ENCODE measurements at regions of chr11 and their contacts with region 1.

Region 1: DNA sequence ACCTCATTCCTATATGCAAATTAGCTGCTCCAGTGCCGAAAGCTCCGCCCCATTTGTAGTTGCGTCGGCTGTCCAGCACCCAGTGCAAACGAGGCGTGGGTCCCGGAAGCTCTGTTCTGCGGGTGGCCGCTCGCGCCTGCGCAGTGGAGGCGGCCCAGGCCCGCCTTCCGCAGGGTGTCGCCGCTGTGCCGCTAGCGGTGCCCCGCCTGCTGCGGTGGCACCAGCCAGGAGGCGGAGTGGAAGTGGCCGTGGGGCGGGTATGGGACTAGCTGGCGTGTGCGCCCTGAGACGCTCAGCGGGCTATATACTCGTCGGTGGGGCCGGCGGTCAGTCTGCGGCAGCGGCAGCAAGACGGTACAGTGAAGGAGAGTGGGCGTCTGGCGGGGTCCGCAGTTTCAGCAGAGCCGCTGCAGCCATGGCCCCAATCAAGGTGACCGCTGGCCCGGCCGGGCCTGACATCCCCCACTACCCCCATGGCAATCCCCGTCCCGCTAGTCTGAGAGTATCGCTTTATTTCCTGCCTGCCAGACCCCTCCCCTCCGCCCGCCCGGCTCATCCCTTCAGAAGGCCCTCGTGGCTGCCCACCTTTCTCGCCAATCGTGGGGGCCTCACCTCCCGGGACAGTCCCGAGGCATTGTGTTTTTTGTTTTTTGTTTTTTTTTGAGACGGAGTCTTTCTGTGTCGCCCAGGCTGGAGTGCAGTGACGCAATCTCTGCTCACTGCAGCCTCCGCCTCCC is at the start of gene PRDX5:
- DNase-seq: peak; percentile 93 to 97 (median 96)
- ATAC-seq: peak; percentile 87
- H3K4me3 ChIP-seq: peak within 1 kb of the TSS; percentile 60
- H3K4me3 Mint-ChIP-seq: peak within 1 kb of the TSS; percentile 85 to 99 (median 96)
- H3K27ac ChIP-seq: peak within 1 kb of the TSS; percentile 92
- H3K27ac Mint-ChIP-seq: peak within 1 kb of the TSS; percentile 97 to 100 (median 100)
- H3K4me1 ChIP-seq: peaks cover 7 to 10% of the 10 kb centered on the region in 2 donors
- H3K4me1 Mint-ChIP-seq: peaks cover 20 to 40% (median 28%) of the 10 kb centered on the region in 7 donors
- H3K27me3 ChIP-seq: no peaks in the 10 kb centered on the region
- H3K27me3 Mint-ChIP-seq: no peaks in the 10 kb centered on the region
- total RNA-seq, gene PRDX5: 41.4 to 99.2 (median 55.2) TPM

Region 2: GRCh38 chr11:63986156-63986931 is 331.8 kb before region 1 on chr11 and contains the start of gene OTUB1:
- CTCF ChIA-PET with region 1: no interaction called
- POLR2A ChIA-PET with region 1: interaction called, 3 read pairs
- intact Hi-C with region 1: loop called in 1 of 2 experiments (anchors 2 kb)
- DNase-seq: peak; percentile 64 to 86 (median 83)
- ATAC-seq: peak; percentile 94
- H3K4me3 ChIP-seq: peak within 1 kb of the TSS; percentile 100
- H3K4me3 Mint-ChIP-seq: peak within 1 kb of the TSS; percentile 91 to 99 (median 97)
- H3K27ac ChIP-seq: peak within 1 kb of the TSS; percentile 89
- H3K27ac Mint-ChIP-seq: peak within 1 kb of the TSS; percentile 95 to 99 (median 98)
- H3K4me1 ChIP-seq: peaks cover 14 to 20% of the 10 kb centered on the region in 2 donors
- H3K4me1 Mint-ChIP-seq: peaks cover 11 to 40% (median 35%) of the 10 kb centered on the region in 7 donors
- H3K27me3 ChIP-seq: no peaks in the 10 kb centered on the region
- H3K27me3 Mint-ChIP-seq: no peaks in the 10 kb centered on the region
- total RNA-seq, gene OTUB1: 59.4 to 99.0 (median 72.5) TPM

Region 3: GRCh38 chr11:64225612-64226506 is 92.3 kb before region 1 on chr11 and contains the starts of genes NUDT22 and TRPT1:
- CTCF ChIA-PET with region 1: interaction called, 5 read pairs
- POLR2A ChIA-PET with region 1: interaction called, 13 read pairs
- intact Hi-C with region 1: no loop called
- DNase-seq: peak; percentile 81 to 97 (median 86)
- ATAC-seq: peak; percentile 82
- H3K4me3 ChIP-seq: peak within 1 kb of the TSS; percentile 60
- H3K4me3 Mint-ChIP-seq: peak within 1 kb of the TSS; percentile 87 to 96 (median 92)
- H3K27ac ChIP-seq: peak within 1 kb of the TSS; percentile 89
- H3K27ac Mint-ChIP-seq: peak within 1 kb of the TSS; percentile 76 to 97 (median 90)
- H3K4me1 ChIP-seq: peaks cover 28 to 34% of the 10 kb centered on the region in 2 donors
- H3K4me1 Mint-ChIP-seq: peaks cover 15 to 46% (median 34%) of the 10 kb centered on the region in 7 donors
- H3K27me3 ChIP-seq: no peaks in the 10 kb centered on the region
- H3K27me3 Mint-ChIP-seq: no peaks in the 10 kb centered on the region
- total RNA-seq, gene NUDT22: 47.8 to 94.0 (median 78.3) TPM
- total RNA-seq, gene TRPT1: 24.0 to 53.0 (median 27.2) TPM

Region 4: DNA sequence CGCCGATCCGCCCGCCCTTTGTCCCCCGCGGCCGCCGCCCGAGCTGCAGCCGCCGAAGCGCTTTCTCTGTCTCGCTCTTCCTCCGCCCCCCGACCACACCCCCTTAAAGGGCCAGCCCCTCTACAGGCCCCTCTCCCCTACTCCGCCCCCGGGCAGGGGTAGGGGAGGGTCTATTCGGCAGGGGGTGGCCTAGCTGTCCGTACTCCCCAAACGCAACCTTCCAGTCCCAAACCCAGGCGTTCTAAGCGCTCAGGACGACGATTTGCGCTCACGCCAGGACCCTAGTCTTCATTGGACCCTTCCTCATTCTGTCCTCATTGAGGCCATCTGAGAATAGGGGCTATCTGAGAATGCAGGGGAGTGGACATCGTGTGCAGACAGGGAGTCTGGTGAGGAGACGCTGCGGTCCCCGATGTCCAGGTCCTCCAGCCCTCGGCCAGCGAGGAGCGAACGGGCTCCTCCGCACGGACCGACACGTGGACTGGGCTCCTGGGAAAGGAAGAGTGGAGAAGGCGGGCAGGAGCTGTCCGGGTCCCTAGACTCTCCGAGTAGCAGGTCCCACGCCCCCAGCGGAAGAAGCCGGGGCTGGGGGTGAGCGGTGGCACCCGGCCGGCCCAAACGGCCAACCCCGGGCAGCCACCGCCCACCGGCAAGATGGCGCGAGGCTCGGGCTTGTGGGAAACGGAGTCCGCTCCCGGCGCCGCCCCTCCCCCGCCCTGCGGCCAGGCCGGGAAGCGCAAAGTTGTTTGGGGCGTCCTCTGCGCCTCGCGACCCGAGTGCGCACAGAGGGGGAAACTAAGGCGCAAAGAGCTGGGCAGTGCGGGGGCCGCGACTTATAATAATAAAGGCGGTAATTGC is 71.0 kb before region 1 on chr11 and contains the start of gene PPP1R14B:
- CTCF ChIA-PET with region 1: interaction called, 3 read pairs
- POLR2A ChIA-PET with region 1: interaction called, 17 read pairs
- intact Hi-C with region 1: no loop called
- DNase-seq: peak; percentile 55 to 88 (median 70)
- ATAC-seq: peak; percentile 75
- H3K4me3 ChIP-seq: peak within 1 kb of the TSS; percentile 100
- H3K4me3 Mint-ChIP-seq: peak within 1 kb of the TSS; percentile 83 to 93 (median 88)
- H3K27ac ChIP-seq: peak within 1 kb of the TSS; percentile 64
- H3K27ac Mint-ChIP-seq: peak within 1 kb of the TSS; percentile 65 to 88 (median 85)
- H3K4me1 ChIP-seq: peaks cover 25 to 27% of the 10 kb centered on the region in 2 donors
- H3K4me1 Mint-ChIP-seq: peaks cover 7 to 46% (median 32%) of the 10 kb centered on the region in 7 donors
- H3K27me3 ChIP-seq: no peaks in the 10 kb centered on the region
- H3K27me3 Mint-ChIP-seq: peaks cover 0 to 3% (median 0%) of the 10 kb centered on the region in 5 donors
- total RNA-seq, gene PPP1R14B: 20.1 to 116 (median 26.0) TPM

Region 5: DNA sequence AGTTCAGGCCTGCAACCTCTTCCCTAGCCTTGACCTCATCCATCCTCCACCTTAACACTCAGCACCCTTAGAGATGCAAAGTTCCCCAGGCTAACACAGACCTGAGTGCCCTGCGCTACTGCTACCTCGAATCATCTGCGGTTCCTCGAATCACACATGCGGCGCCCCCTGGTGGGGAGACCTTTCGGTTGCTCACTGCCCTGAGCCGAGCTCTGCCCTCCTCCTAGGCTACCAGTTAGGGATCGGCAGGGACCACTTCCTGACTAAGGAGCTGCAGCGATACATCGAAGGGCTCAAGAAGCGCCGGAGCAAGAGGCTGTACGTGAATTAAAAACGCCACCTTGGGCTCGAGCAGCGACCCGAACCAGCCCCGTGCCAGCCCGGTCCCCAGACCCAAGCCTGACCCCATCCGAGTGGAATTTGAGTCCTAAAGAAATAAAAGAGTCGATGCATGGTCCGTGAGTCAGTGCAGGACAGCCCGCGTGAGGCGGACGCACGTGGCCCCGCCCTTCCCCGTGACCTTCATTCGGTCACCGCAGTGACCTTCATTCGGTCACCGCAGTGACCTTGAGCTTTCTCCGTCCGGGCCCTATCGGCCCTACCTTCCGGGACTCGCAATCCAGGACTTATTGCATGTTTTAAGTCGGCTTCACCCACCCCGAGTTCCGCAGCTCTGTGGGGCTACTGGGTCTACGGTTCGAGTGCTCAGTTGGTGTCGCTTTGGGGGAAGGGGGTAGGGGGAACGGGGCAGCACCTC is 13.6 kb before region 1 on chr11:
- CTCF ChIA-PET with region 1: interaction called, 14 read pairs
- POLR2A ChIA-PET with region 1: interaction called, 34 read pairs
- intact Hi-C with region 1: loop called (anchors 1 kb)
- DNase-seq: peak; percentile 79 to 95 (median 90)
- ATAC-seq: peak; percentile 40
- H3K4me3 ChIP-seq: peak overlapping the region; percentile 97
- H3K4me3 Mint-ChIP-seq: peak overlapping the region; percentile 89 to 98 (median 94)
- H3K27ac ChIP-seq: peak overlapping the region; percentile 91
- H3K27ac Mint-ChIP-seq: peak overlapping the region; percentile 81 to 98 (median 95)
- H3K4me1 ChIP-seq: peaks cover 28 to 32% of the 10 kb centered on the region in 2 donors
- H3K4me1 Mint-ChIP-seq: peaks cover 25 to 43% (median 34%) of the 10 kb centered on the region in 7 donors
- H3K27me3 ChIP-seq: peaks cover 0 to 13% of the 10 kb centered on the region in 2 donors
- H3K27me3 Mint-ChIP-seq: peaks cover 13 to 29% (median 16%) of the 10 kb centered on the region in 5 donors

Region 6: DNA sequence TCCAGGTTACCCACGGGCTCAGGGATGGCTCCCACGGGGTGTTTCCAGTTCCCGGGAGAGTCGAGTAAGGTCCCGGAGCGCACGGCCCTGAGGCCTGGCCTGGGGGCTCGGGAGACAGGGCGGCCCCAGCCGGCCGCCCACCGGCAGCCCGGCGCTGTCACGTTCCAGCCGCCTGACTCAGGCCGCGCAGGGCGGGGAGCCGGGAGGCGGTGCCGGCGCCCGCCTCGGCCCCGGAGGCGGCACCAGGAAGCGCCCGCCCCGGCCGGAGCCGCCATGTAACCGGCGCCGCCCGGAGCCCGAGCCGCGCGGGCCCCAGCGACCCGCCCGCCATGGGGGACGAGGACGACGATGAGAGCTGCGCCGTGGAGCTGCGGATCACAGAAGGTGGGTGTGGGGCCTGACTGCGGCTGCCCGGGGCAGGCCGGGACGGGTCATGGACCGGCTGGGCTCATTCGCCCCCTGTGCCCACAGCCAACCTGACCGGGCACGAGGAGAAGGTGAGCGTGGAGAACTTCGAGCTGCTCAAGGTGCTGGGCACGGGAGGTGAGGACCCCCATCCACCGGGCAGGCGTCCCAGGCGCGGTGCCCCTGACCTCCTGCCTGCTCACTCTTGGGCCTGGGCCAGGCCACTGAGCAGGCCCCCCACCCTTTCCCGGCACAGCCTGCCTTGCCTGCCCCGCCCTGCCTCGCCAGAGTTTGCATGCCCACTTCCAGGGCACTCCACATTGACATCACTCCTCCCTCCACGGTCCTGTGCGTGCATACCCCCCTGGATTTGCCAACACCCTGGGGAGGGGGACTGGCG is 41.0 kb after region 1 on chr11 and contains the start of gene RPS6KA4:
- CTCF ChIA-PET with region 1: interaction called, 18 read pairs
- POLR2A ChIA-PET with region 1: interaction called, 25 read pairs
- intact Hi-C with region 1: loop called (anchors 1 kb)
- DNase-seq: peak in 7 of 9 donors; percentile 25 to 79 (median 36)
- ATAC-seq: peak; percentile 80
- H3K4me3 ChIP-seq: peak within 1 kb of the TSS; percentile 60
- H3K4me3 Mint-ChIP-seq: peak within 1 kb of the TSS; percentile 83 to 100 (median 91)
- H3K27ac ChIP-seq: peak within 1 kb of the TSS; percentile 68
- H3K27ac Mint-ChIP-seq: peak within 1 kb of the TSS; percentile 56 to 94 (median 72)
- H3K4me1 ChIP-seq: peaks cover 10 to 16% of the 10 kb centered on the region in 2 donors
- H3K4me1 Mint-ChIP-seq: peaks cover 16 to 40% (median 30%) of the 10 kb centered on the region in 7 donors
- H3K27me3 ChIP-seq: no peaks in the 10 kb centered on the region
- H3K27me3 Mint-ChIP-seq: no peaks in the 10 kb centered on the region
- total RNA-seq, gene RPS6KA4: 14.2 to 35.7 (median 27.9) TPM

Region 7: GRCh38 chr11:64778508-64779346 is 460.6 kb after region 1 on chr11 and contains the start of gene SF1:
- CTCF ChIA-PET with region 1: no interaction called
- POLR2A ChIA-PET with region 1: interaction called, 4 read pairs
- intact Hi-C with region 1: loop called in 1 of 2 experiments (anchors 1 kb)
- DNase-seq: peak; percentile 86 to 100 (median 100)
- ATAC-seq: peak; percentile 89
- H3K4me3 ChIP-seq: peak within 1 kb of the TSS; percentile 94
- H3K4me3 Mint-ChIP-seq: peak within 1 kb of the TSS; percentile 90 to 97 (median 94)
- H3K27ac ChIP-seq: peak within 1 kb of the TSS; percentile 99
- H3K27ac Mint-ChIP-seq: peak within 1 kb of the TSS; percentile 98 to 100 (median 99)
- H3K4me1 ChIP-seq: peaks cover 48 to 52% of the 10 kb centered on the region in 2 donors
- H3K4me1 Mint-ChIP-seq: peaks cover 51 to 71% (median 64%) of the 10 kb centered on the region in 7 donors
- H3K27me3 ChIP-seq: no peaks in the 10 kb centered on the region
- H3K27me3 Mint-ChIP-seq: peaks cover 0 to 5% (median 0%) of the 10 kb centered on the region in 5 donors
- total RNA-seq, gene SF1: 462 to 1,612 (median 904) TPM

Measured in naive thymus-derived CD4-positive, alpha-beta T cell (primary cell).